B cell (primary cell): ENCODE measurements at regions of chr12 and their contacts with region 1.

Region 1: GRCh38 chr12:94769047-94769420 is 118.7 kb upstream of the TMCC3 start:
- DNase-seq: peak; percentile 74
- ATAC-seq: peak; percentile 89
- H3K4me3 ChIP-seq: peak overlapping the region; percentile 36 to 60 (median 54)
- H3K4me3 Mint-ChIP-seq: peak overlapping the region; percentile 90
- H3K27ac ChIP-seq: peak overlapping the region; percentile 69 to 70
- H3K27ac Mint-ChIP-seq: peak overlapping the region; percentile 82
- H3K4me1 ChIP-seq: peaks cover 50 to 54% of the 10 kb centered on the region in 2 donors
- H3K4me1 Mint-ChIP-seq: peaks cover 63% of the 10 kb centered on the region
- H3K27me3 ChIP-seq: no peaks in the 10 kb centered on the region
- H3K27me3 Mint-ChIP-seq: no peaks in the 10 kb centered on the region
- CTCF ChIP-seq: no peak

Region 2: GRCh38 chr12:94649349-94650142 is 119.5 kb before region 1 on chr12:
- CTCF ChIA-PET with region 1: no interaction called
- POLR2A ChIA-PET with region 1: no interaction called
- intact Hi-C with region 1: no loop called
- DNase-seq: peak; percentile 64
- ATAC-seq: peak; percentile 71
- H3K4me3 ChIP-seq: peak overlapping the region; percentile 21 to 70 (median 60)
- H3K4me3 Mint-ChIP-seq: peak overlapping the region; percentile 90
- H3K27ac ChIP-seq: no peak overlapping the region
- H3K27ac Mint-ChIP-seq: peak overlapping the region; percentile 74
- H3K4me1 ChIP-seq: peaks cover 11 to 18% of the 10 kb centered on the region in 2 donors
- H3K4me1 Mint-ChIP-seq: peaks cover 32% of the 10 kb centered on the region
- H3K27me3 ChIP-seq: peaks cover 0 to 7% (median 2%) of the 10 kb centered on the region in 4 experiments
- H3K27me3 Mint-ChIP-seq: peaks cover 4% of the 10 kb centered on the region
- CTCF ChIP-seq: peak; percentile 56

Region 3: GRCh38 chr12:94831081-94831751 is 62.2 kb after region 1 on chr12:
- CTCF ChIA-PET with region 1: interaction called, 3 read pairs
- POLR2A ChIA-PET with region 1: no interaction called
- intact Hi-C with region 1: loop called (anchors 2 kb)
- DNase-seq: peak; percentile 86
- ATAC-seq: peak; percentile 94
- H3K4me3 ChIP-seq: peak overlapping the region in 2 of 5 experiments; percentile 5 to 23
- H3K4me3 Mint-ChIP-seq: peak overlapping the region; percentile 95
- H3K27ac ChIP-seq: peak overlapping the region; percentile 92 to 94
- H3K27ac Mint-ChIP-seq: peak overlapping the region; percentile 100
- H3K4me1 ChIP-seq: peaks cover 39% of the 10 kb centered on the region in 2 donors
- H3K4me1 Mint-ChIP-seq: peaks cover 47% of the 10 kb centered on the region
- H3K27me3 ChIP-seq: no peaks in the 10 kb centered on the region
- H3K27me3 Mint-ChIP-seq: no peaks in the 10 kb centered on the region
- CTCF ChIP-seq: no peak

Region 4: DNA sequence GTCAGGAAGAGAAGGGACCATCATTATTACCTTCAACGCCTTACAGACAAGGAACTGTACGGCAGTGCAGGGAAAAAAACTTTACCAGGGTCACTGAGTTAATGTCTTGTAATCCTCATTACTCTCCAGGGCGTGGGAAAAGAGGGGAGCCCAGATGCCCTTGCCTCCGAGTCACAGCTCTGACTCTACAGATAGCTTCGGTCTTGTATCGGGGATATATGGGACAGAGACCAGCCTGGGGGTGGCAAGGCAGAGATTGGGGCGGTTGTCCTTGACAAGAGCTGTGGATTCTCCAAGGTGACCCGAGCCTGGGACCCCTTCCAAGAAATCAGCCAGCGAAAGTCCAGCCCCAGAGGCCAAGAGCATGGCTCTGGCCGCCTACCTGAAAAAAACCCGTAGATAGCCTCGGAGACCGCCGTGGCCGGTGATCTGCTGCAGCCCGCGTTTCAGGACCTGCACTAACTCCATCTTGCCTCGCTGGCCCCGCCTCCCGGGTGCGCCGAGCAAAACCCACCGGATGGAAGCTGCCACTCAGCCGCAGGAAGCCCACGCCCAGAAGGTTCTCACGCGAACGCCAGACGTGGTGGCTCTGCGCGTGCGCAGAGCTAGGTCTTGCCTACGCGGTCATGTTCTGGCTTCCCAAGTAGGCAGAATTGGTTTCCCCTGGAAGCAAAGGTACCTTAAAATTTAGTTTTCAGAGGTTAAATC is 234.3 kb after region 1 on chr12 and contains the start of gene NDUFA12:
- CTCF ChIA-PET with region 1: no interaction called
- POLR2A ChIA-PET with region 1: no interaction called
- intact Hi-C with region 1: loop called (anchors 5 kb)
- DNase-seq: peak; percentile 96
- ATAC-seq: peak; percentile 100
- H3K4me3 ChIP-seq: peak within 1 kb of the TSS; percentile 75 to 98 (median 81)
- H3K4me3 Mint-ChIP-seq: peak within 1 kb of the TSS; percentile 98
- H3K27ac ChIP-seq: peak within 1 kb of the TSS; percentile 82
- H3K27ac Mint-ChIP-seq: peak within 1 kb of the TSS; percentile 98
- H3K4me1 ChIP-seq: peaks cover 15 to 24% of the 10 kb centered on the region in 2 donors
- H3K4me1 Mint-ChIP-seq: peaks cover 38% of the 10 kb centered on the region
- H3K27me3 ChIP-seq: no peaks in the 10 kb centered on the region
- H3K27me3 Mint-ChIP-seq: no peaks in the 10 kb centered on the region
- CTCF ChIP-seq: no peak
- total RNA-seq, gene NDUFA12: 41.7 and 42.0 TPM in 2 replicates